Activated CD4-positive, alpha-beta memory T cell treated with anti-CD3 and anti-CD28 coated beads, Interleukin-2, amount 10 ng/mL, durations not matched to agents 7 days and 5 days (primary cell): ENCODE measurements at regions of chr14 and their contacts with region 1.

Region 1: DNA sequence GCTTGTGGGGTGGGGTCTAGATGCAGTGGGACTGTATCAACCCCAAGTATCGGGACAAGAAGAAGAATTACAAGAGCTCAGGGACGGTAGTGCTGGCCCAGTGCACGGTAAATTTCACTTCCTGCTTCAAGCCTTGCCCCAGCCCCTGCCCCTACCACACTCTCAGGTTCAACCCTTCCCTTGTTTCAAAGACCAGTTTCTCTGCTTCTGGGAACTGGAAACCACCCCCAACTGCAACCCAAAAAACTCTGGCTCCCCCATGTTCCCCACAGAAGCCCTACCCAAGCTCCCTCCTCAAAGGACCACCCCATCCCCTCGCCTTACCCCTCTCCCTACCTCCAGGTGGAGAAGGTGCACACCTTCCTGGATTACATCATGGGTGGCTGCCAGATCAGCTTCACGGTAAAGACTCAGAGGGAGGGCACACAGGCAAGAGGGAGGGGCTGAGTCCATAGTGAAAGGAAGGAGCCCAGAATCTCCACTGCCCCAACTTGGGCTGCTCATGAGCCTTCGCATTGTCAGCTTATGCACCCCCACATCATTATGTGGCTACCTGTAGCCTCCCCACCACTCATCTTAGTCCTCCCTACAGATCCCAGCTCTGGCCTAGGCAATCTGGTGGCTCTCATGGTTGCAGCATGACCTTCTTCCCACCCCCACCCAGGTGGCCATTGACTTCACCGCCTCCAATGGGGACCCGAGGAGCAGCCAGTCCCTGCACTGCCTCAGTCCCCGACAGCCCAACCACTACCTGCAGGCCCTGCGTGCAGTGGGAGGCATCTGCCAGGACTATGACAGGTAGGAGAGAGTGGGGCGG is 4.3 kb downstream of the CPNE6 start:
- DNase-seq: no peak
- H3K4me3 Mint-ChIP-seq: no peak overlapping the region
- H3K27ac Mint-ChIP-seq: no peak overlapping the region
- H3K4me1 Mint-ChIP-seq: peaks cover 30% of the 10 kb centered on the region
- H3K27me3 Mint-ChIP-seq: peaks cover 3% of the 10 kb centered on the region

Region 2: DNA sequence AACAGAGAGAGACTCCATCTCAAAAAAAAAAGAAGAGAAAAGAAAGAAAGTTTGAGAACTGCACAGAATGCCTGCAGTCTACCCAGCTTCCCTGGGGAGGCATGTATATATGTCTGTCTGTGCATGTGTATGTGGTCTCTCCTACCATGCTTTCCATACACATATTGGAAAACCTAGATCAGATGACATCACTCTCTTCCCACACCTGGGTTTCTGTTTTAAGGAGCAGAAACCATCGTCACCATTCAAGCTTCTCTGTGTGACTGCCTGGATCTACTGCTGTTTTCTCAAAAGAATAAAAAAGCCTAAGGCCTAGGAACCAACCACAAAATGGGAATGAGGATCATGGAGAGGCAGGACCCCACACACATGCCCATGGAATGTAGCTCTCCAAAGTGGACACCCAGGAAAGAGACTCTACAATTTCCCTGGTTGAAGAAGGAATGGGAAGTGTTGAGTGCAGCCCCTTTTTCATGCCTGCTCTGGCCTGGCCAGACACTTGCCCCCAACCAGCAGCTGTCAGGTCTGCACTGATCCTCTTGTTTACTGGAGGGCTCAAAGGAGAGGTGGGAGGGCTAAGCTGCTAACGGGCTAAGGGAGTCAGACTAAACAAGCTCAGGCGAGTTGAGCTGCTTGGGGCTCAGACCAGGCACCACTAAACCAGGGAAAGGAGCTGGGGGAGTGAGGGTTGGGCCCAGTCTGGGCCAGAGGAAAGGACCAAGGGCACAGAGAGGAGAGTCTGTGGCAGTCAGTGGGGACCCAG is 10.7 kb after region 1 on chr14:
- CTCF ChIA-PET with region 1: interaction called, 82 read pairs
- POLR2A ChIA-PET with region 1: interaction called, 105 read pairs
- DNase-seq: no peak
- H3K4me3 Mint-ChIP-seq: no peak overlapping the region
- H3K27ac Mint-ChIP-seq: no peak overlapping the region
- H3K4me1 Mint-ChIP-seq: peaks cover 14% of the 10 kb centered on the region
- H3K27me3 Mint-ChIP-seq: peaks cover 11% of the 10 kb centered on the region